ENCODE measurements at regions of chr5 and their contacts with region 1.

Region 1: GRCh38 chr5:35926389-35927051 is 11.9 kb downstream of the CAPSL start:
- DNase-seq: peak; percentile 76
- ATAC-seq: peak; percentile 42
- H3K4me3 Mint-ChIP-seq: peak overlapping the region; percentile 78
- H3K27ac Mint-ChIP-seq: peak overlapping the region; percentile 69
- H3K4me1 Mint-ChIP-seq: peaks cover 49% of the 10 kb centered on the region
- H3K27me3 Mint-ChIP-seq: no peaks in the 10 kb centered on the region

Region 2: DNA sequence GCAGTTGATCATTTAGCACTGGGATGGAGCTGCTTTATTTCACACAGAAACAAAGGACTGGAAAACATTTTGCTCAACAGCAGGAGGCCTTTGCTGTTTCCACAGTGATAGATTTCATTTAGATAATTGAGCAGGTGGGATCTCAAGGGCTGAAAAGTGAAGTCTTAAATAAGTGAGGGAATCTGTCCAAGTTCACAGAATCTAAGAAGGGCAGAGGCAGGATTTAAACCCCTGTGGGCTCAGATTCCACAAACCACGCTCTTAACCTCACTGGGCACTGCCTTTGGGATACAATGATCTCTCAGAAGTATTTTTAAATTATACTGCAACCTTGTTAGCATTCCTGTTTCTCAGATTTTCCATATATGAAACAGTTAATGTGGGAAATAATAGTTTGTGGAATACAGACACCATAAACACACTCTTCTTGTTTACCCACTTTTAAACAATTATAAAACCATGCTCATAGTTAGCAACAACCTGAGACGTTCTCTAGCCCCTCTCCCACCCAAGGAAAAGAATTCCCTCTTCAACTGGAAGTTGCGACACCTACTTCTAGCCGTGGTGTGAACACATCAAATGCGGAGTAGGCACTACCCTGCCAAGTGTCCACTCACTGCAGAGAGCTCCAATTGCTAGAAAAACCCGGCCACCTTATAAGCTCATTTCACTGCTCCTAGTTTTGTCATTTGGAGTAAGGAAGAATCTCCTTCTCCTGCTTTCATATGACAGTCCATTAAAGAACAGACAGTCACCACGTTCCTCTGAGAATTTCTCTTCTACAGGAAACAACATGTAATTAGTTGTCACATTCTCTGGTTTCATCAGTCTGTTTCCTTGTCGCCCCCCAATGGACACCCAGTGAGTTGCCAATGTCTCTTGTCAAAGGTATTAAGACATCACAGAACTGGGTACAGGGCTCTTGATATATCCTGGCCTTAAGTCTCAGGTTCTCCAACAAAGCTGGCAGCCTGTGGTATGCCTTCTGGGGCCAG is 743.7 kb before region 1 on chr5:
- CTCF ChIA-PET with region 1: no interaction called
- POLR2A ChIA-PET with region 1: no interaction called
- intact Hi-C with region 1: loop called in 1 of 2 experiments (anchors 1 kb)
- DNase-seq: peak; percentile 67
- ATAC-seq: peak; percentile 70
- H3K4me3 Mint-ChIP-seq: no peak overlapping the region
- H3K27ac Mint-ChIP-seq: no peak overlapping the region
- H3K4me1 Mint-ChIP-seq: no peaks in the 10 kb centered on the region
- H3K27me3 Mint-ChIP-seq: peaks cover 9% of the 10 kb centered on the region

Region 3: DNA sequence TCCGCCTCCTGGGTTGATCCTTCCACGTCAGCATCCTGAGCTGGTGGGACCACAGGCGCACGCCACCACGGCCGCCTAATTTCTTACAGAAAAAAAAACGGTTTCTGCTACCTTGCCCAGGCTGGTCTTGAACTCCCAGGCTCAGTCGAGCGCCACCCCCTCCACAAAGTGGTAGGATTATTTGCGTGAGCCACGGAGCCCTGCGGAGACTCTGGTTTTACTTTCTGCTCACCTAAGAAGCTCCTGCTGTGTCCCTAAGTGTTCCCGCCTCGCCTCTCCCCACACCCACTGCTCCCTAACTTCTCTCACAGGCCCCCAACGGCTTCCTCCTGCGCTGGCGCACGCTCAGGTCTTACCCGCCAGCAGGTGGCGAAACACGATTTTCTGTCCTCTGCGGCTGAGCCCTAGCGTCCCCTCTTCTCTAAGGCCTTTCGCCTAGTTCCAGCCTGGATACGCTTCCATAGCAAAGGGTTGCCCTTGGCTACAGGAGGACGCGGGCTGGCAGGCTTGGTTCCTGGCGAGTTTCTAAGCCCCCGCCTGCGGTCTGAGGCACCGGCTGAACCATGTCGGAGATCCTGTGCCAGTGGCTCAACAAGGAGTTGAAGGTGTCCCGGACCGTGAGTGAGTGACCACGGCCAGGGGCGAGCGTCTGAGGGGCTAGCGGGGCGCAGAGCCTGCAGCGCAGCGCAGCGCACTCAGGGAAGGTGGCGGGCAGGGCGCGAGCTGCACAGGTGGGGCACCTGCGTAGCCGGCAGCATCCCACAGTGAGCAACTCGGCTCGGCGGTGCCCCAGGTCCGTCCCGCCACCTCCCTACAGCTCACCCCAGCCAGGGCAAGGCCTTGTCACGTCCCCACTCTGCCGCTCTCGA is 308.9 kb before region 1 on chr5 and contains the start of gene SPEF2:
- CTCF ChIA-PET with region 1: interaction called, 26 read pairs
- POLR2A ChIA-PET with region 1: interaction called, 3 read pairs
- intact Hi-C with region 1: loop called (anchors 1 kb)
- DNase-seq: peak; percentile 91
- ATAC-seq: peak; percentile 92
- H3K4me3 Mint-ChIP-seq: peak within 1 kb of the TSS; percentile 83
- H3K27ac Mint-ChIP-seq: peak within 1 kb of the TSS; percentile 99
- H3K4me1 Mint-ChIP-seq: peaks cover 31% of the 10 kb centered on the region
- H3K27me3 Mint-ChIP-seq: no peaks in the 10 kb centered on the region
- total RNA-seq, gene SPEF2: 14.1 to 14.6 TPM

Region 4: GRCh38 chr5:35777358-35778087 is 149.0 kb before region 1 on chr5:
- CTCF ChIA-PET with region 1: interaction called, 54 read pairs
- POLR2A ChIA-PET with region 1: no interaction called
- intact Hi-C with region 1: loop called (anchors 1 kb)
- DNase-seq: peak; percentile 86
- ATAC-seq: peak; percentile 33
- H3K4me3 Mint-ChIP-seq: peak overlapping the region; percentile 17
- H3K27ac Mint-ChIP-seq: peak overlapping the region; percentile 79
- H3K4me1 Mint-ChIP-seq: peaks cover 84% of the 10 kb centered on the region
- H3K27me3 Mint-ChIP-seq: no peaks in the 10 kb centered on the region

Region 5: GRCh38 chr5:35830587-35830986 is 95.9 kb before region 1 on chr5:
- CTCF ChIA-PET with region 1: interaction called, 4 read pairs
- POLR2A ChIA-PET with region 1: interaction called, 5 read pairs
- intact Hi-C with region 1: loop called in 1 of 2 experiments (anchors 2 kb)
- DNase-seq: no peak
- ATAC-seq: peak; percentile 8
- H3K4me3 Mint-ChIP-seq: peak overlapping the region; percentile 30
- H3K27ac Mint-ChIP-seq: peak overlapping the region; percentile 91
- H3K4me1 Mint-ChIP-seq: peaks cover 93% of the 10 kb centered on the region
- H3K27me3 Mint-ChIP-seq: no peaks in the 10 kb centered on the region

Region 6: DNA sequence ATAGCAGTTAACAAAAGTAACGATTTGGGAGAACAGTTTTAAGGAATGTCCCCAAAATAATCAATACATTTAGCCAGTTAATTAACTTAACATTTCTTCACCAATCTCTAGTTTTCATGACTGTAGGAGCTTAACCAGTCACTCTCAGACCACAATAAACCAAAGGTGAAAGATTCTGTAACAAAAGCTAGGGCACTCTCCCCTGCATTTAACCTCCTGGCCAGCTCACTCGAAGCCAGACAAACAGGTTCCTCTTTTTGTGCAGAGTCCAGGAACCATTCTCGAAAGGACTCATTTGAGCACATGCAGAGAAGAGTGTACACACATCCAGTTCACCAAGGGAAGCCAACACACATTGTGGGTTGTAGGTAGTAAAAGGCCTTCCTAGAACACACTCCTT is 63.4 kb before region 1 on chr5:
- CTCF ChIA-PET with region 1: interaction called, 38 read pairs
- POLR2A ChIA-PET with region 1: interaction called, 4 read pairs
- intact Hi-C with region 1: no loop called
- DNase-seq: peak; percentile 56
- ATAC-seq: peak; percentile 71
- H3K4me3 Mint-ChIP-seq: peak overlapping the region; percentile 89
- H3K27ac Mint-ChIP-seq: peak overlapping the region; percentile 95
- H3K4me1 Mint-ChIP-seq: peaks cover 82% of the 10 kb centered on the region
- H3K27me3 Mint-ChIP-seq: no peaks in the 10 kb centered on the region